ENCODE measurements at regions of chr10 and their contacts with region 1.

Region 1: DNA sequence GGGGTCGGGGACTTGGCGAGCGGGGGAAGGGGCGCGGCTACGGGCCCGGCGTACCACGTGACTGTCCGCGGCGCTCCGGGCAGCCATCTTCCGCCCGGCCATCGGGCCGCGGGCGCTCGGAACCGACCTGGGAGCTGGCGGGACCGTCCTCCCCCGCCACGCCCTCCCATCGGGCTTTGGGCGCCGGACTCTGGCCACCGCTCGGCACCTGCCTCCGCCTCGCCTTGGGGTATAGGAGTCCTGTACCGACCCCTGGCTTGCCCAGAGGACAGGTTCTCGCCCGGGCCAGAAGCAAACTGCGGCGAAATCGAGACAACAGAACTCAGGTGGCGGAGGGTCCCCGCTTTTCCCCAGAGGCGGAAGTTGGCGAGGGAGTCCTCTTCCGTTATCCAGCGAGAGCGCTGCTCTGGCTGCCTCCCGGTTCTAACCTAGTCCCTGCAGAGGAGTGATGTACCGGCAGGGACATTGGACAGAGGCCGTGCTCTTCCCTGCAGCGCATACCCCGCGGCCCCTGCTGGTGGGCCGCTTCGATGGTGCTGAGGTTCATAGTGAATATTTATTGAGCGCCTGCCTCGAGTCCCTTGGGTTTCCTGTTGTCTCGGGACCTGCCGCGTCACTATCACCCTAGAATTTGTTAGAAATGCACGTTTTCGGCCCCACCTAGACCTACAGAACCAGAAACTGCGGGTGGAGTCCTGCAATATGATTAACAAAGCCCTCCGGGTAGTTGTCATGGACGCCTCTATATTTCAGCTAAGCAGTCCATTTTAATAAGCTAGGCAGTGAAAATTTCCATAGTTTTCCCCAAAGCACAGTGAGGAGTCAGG is 1.3 kb upstream of the SGMS1 start:
- DNase-seq: peak; percentile 70 to 93 (median 89)
- ATAC-seq: peak; percentile 48 to 82 (median 68)
- H3K4me3 ChIP-seq: peak overlapping the region; percentile 68 to 98 (median 92)
- H3K27ac ChIP-seq: peak overlapping the region; percentile 96 to 99 (median 99)
- H3K4me1 ChIP-seq: peaks cover 0 to 28% (median 18%) of the 10 kb centered on the region in 12 donors
- H3K27me3 ChIP-seq: no peaks in the 10 kb centered on the region
- CTCF ChIP-seq: peak; percentile 45 to 79 (median 65)
- POLR2A ChIP-seq: peak in 1 of 2 donors; percentile 37

Region 2: GRCh38 chr10:50310560-50311174 is 314.4 kb before region 1 on chr10:
- intact Hi-C with region 1: loop called in 3 of 10 experiments (anchors 10 kb)
- DNase-seq: no peak
- ATAC-seq: no peak
- H3K4me3 ChIP-seq: no peak overlapping the region
- H3K27ac ChIP-seq: no peak overlapping the region
- H3K4me1 ChIP-seq: peaks cover 0 to 12% (median 9%) of the 10 kb centered on the region in 12 donors
- H3K27me3 ChIP-seq: no peaks in the 10 kb centered on the region
- CTCF ChIP-seq: peak in 5 of 12 donors; percentile 7 to 27 (median 16)
- POLR2A ChIP-seq: no peak

Region 3: DNA sequence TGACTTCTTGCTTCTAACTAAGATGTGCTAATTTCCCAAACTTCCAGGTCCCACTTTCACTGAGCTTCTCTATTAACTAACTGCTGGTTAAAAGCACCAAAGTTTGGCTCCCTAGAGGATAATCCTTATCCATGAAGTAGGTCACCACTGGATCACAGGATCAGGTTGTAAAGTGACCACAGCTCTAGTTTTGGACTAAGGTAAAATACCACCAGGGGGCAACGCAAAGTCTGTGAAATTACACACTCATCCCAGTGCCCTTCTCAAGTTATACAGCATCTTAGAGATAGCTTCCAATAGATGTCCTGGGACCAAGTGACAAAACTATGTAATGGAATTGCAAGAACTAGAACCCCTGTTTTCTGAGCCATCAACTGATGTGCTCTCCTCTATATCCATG is 257.3 kb before region 1 on chr10:
- intact Hi-C with region 1: loop called in 2 of 10 experiments (anchors 5 to 10 kb)
- DNase-seq: no peak
- ATAC-seq: peak in 1 of 4 donors; percentile 42
- H3K4me3 ChIP-seq: no peak overlapping the region
- H3K27ac ChIP-seq: no peak overlapping the region
- H3K4me1 ChIP-seq: peaks cover 0 to 18% (median 7%) of the 10 kb centered on the region in 12 donors
- H3K27me3 ChIP-seq: no peaks in the 10 kb centered on the region
- CTCF ChIP-seq: peak in 9 of 12 donors; percentile 10 to 43 (median 28)
- POLR2A ChIP-seq: no peak

Region 4: DNA sequence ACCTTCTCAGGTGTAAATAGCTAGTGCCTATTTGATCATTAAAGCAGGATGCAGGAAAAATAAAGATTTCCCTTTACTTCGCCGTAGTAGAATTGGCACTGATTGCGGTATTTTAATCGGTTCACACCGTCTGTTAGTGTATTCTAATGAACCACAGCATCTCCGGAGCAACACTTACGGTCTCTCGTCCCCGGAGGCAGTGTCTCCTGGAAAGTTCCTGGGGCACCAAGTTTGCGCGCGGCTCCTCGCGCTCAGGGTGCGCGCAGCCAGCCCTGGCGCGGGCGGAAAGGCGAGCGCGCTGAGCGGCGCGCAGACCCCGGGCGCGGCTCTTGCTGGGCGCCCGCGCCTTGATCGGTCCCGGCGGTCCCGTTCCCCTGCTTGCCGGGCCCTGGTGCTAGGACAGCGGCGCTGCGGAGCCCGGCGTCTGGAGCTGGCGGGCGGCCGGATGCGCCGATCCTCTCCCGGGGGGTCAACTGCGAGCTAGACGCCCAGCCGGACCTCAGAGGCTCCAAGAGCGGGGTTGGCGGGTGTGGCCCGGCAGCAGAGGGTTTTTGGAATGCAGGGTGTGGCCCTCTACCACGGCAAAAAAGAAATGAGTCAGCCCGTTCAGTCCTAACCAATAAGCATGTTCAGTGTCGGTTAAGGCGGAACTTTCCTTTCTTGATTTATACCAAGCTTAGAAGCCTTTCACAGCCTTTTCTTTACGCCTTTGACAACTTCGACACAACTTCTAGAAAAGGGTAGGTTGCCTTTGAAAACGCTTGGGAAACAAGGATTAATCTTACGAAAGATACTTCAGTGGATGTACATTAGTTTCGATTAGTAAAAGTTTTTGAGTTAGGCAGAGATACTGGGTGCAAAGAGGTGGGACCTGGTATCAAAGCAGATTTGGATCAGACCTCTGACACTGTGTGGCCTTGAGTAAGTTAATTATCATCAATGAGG is 206.9 kb before region 1 on chr10:
- intact Hi-C with region 1: loop called (anchors 1 to 5 kb)
- DNase-seq: peak; percentile 79 to 88 (median 85)
- ATAC-seq: peak; percentile 65 to 96 (median 91)
- H3K4me3 ChIP-seq: peak overlapping the region; percentile 50 to 88 (median 75)
- H3K27ac ChIP-seq: peak overlapping the region; percentile 54 to 91 (median 76)
- H3K4me1 ChIP-seq: peaks cover 0 to 86% (median 9%) of the 10 kb centered on the region in 12 donors
- H3K27me3 ChIP-seq: no peaks in the 10 kb centered on the region
- CTCF ChIP-seq: peak in 4 of 12 donors; percentile 15 to 40 (median 26)
- POLR2A ChIP-seq: peak in 1 of 2 donors; percentile 61

Region 5: GRCh38 chr10:50497757-50498156 is 127.3 kb before region 1 on chr10:
- intact Hi-C with region 1: loop called in 1 of 10 experiments (anchors 1 kb)
- DNase-seq: no peak
- ATAC-seq: peak in 3 of 4 donors; percentile 73 to 77 (median 75)
- H3K4me3 ChIP-seq: peak overlapping the region in 6 of 12 donors; percentile 6 to 22 (median 18)
- H3K27ac ChIP-seq: peak overlapping the region; percentile 22 to 79 (median 56)
- H3K4me1 ChIP-seq: peaks cover 0 to 40% (median 24%) of the 10 kb centered on the region in 12 donors
- H3K27me3 ChIP-seq: no peaks in the 10 kb centered on the region
- CTCF ChIP-seq: no peak
- POLR2A ChIP-seq: no peak

Region 6: GRCh38 chr10:50552771-50553535 is 72.1 kb before region 1 on chr10:
- intact Hi-C with region 1: loop called in 9 of 10 experiments (anchors 2 to 5 kb)
- DNase-seq: no peak
- ATAC-seq: no peak
- H3K4me3 ChIP-seq: no peak overlapping the region
- H3K27ac ChIP-seq: peak overlapping the region in 8 of 12 donors; percentile 36 to 59 (median 44)
- H3K4me1 ChIP-seq: peaks cover 3 to 85% (median 61%) of the 10 kb centered on the region in 12 donors
- H3K27me3 ChIP-seq: no peaks in the 10 kb centered on the region
- CTCF ChIP-seq: peak in 6 of 12 donors; percentile 13 to 36 (median 21)
- POLR2A ChIP-seq: no peak

Region 7: GRCh38 chr10:51272555-51272954 is 647.5 kb after region 1 on chr10:
- intact Hi-C with region 1: no loop called
- DNase-seq: peak in 3 of 5 donors; percentile 29 to 50 (median 34)
- ATAC-seq: peak in 3 of 4 donors; percentile 15 to 67 (median 24)
- H3K4me3 ChIP-seq: no peak overlapping the region
- H3K27ac ChIP-seq: peak overlapping the region in 2 of 12 donors; percentile 6 to 16
- H3K4me1 ChIP-seq: peaks cover 0 to 32% (median 4%) of the 10 kb centered on the region in 12 donors
- H3K27me3 ChIP-seq: no peaks in the 10 kb centered on the region
- CTCF ChIP-seq: no peak
- POLR2A ChIP-seq: no peak

Measured in heart left ventricle (tissue), 16 donors.